Activated B cell treated with CpG ODN at 0.5 μM for 24 hours (primary cell): ENCODE measurements at regions of chr1 and their contacts with region 1.

Region 1: GRCh38 chr1:12031039-12031980 is 12.0 kb downstream of the MIIP start:
- DNase-seq: no peak
- ATAC-seq: peak; percentile 73
- H3K4me3 Mint-ChIP-seq: no peak overlapping the region
- H3K27ac Mint-ChIP-seq: no peak overlapping the region
- H3K4me1 Mint-ChIP-seq: peaks cover 15% of the 10 kb centered on the region
- H3K27me3 Mint-ChIP-seq: no peaks in the 10 kb centered on the region
- CTCF ChIP-seq: no peak

Region 2: GRCh38 chr1:12001249-12001917 is 29.9 kb before region 1 on chr1:
- CTCF ChIA-PET with region 1: interaction called, 3 read pairs
- POLR2A ChIA-PET with region 1: no interaction called
- intact Hi-C with region 1: loop called (anchors 2 kb)
- DNase-seq: no peak
- ATAC-seq: no peak
- H3K4me3 Mint-ChIP-seq: no peak overlapping the region
- H3K27ac Mint-ChIP-seq: no peak overlapping the region
- H3K4me1 Mint-ChIP-seq: peaks cover 11% of the 10 kb centered on the region
- H3K27me3 Mint-ChIP-seq: no peaks in the 10 kb centered on the region
- CTCF ChIP-seq: no peak